WTC11 (cell line): ENCODE measurements at regions of chr12 and their contacts with region 1.

Region 1: GRCh38 chr12:94101738-94102660 is 46.4 kb upstream of the PLXNC1 start:
- DNase-seq: peak; percentile 88
- ATAC-seq: peak; percentile 81
- H3K4me3 Mint-ChIP-seq: peak overlapping the region; percentile 75
- H3K27ac Mint-ChIP-seq: no peak overlapping the region
- H3K4me1 Mint-ChIP-seq: peaks cover 9% of the 10 kb centered on the region
- H3K27me3 Mint-ChIP-seq: peaks cover 34% of the 10 kb centered on the region
- CTCF ChIP-seq: peak; percentile 58

Region 2: DNA sequence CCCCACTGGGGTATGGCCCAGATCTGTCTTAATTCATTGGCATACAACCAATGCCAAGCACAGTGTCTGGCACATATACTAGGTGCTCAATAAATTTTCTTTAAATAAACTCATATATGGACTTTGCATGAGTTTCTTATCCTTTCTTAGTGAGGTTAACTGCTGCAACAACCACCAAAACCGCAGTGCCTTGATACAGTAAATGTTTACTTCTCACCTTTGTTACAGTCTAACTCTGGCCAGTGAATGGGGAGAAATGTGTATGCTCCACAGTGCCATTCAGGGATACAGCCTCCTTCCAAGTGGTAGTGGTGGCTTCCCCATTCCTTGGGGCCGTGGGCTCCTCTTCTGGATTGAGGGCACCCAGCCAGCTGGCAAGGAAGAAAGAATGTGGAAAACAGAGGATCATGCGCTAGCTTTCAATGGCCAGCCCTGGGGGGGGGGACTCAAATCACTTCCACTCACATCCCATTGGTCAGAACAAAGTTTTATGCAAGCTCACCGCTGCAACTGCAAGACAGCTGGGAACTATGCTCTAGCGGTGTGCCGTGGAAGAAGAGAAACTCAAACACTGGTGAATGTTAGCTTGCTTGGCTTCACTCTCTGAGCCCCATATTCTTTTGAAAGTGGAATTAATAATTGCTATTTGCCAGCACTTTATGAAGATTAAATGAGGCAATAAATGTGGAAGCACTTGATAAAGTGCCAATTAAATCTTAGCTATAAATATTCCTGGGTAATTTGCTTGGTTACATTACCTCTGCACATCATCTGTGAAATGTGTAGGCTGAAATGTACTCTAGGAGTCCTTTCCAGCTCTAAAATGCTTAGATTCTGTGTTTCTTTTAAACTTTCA is 580.5 kb before region 1 on chr12:
- CTCF ChIA-PET with region 1: interaction called, 53 read pairs
- POLR2A ChIA-PET with region 1: interaction called, 7 read pairs
- DNase-seq: no peak
- ATAC-seq: peak; percentile 44
- H3K4me3 Mint-ChIP-seq: no peak overlapping the region
- H3K27ac Mint-ChIP-seq: no peak overlapping the region
- H3K4me1 Mint-ChIP-seq: peaks cover 16% of the 10 kb centered on the region
- H3K27me3 Mint-ChIP-seq: no peaks in the 10 kb centered on the region
- CTCF ChIP-seq: no peak

Region 3: DNA sequence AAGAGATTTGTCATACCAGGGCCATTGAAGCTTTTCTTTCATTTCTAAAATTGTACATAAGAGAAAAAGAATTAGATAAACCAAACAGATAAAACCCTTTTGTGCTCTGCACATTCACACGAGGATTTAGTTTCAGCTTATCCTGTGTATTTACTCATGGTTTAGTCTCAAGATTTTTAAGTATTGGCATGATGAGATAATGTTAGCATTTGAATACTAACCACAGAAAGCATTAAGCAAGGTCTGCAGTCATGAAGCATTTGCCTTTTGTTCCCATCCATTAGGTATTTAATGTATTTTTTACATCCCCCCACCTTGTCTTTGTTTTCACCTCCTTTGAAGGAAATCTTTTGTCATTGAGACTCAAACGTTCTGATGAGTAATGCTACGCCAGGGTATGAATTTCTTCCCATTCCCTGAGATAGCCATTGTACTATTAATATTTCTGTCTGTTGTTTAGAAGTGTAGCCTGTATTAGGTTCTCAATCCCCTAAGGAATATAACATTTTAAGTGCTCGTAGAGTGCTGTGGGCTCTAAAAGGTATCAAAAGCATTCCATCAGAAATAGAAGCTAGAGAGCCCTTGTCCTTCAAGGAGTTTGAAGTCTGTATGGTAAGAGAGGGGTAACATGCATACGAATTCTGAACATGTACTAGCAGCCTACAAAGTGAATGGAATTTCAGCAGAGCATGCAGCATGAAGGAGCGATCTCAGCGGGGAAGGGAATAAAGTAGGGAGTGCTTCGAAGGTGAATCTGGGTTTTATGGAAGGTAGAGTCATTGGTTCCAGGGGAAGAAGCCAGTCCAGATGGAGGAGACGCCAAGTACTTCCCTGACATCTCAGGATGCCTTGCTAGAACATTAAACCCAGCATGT is 402.5 kb before region 1 on chr12:
- CTCF ChIA-PET with region 1: interaction called, 11 read pairs
- POLR2A ChIA-PET with region 1: interaction called, 3 read pairs
- DNase-seq: no peak
- ATAC-seq: peak; percentile 51
- H3K4me3 Mint-ChIP-seq: peak overlapping the region; percentile 25
- H3K27ac Mint-ChIP-seq: peak overlapping the region; percentile 66
- H3K4me1 Mint-ChIP-seq: peaks cover 57% of the 10 kb centered on the region
- H3K27me3 Mint-ChIP-seq: no peaks in the 10 kb centered on the region
- CTCF ChIP-seq: no peak

Region 4: GRCh38 chr12:93825931-93826555 is 276.0 kb before region 1 on chr12:
- CTCF ChIA-PET with region 1: interaction called, 25 read pairs
- POLR2A ChIA-PET with region 1: no interaction called
- DNase-seq: no peak
- ATAC-seq: no peak
- H3K4me3 Mint-ChIP-seq: no peak overlapping the region
- H3K27ac Mint-ChIP-seq: no peak overlapping the region
- H3K4me1 Mint-ChIP-seq: peaks cover 10% of the 10 kb centered on the region; the same call in 1 of the 2 replicates
- H3K27me3 Mint-ChIP-seq: peaks cover 10% of the 10 kb centered on the region
- CTCF ChIP-seq: no peak

Region 5: GRCh38 chr12:93982771-93983315 is 119.2 kb before region 1 on chr12:
- CTCF ChIA-PET with region 1: interaction called, 14 read pairs
- POLR2A ChIA-PET with region 1: interaction called, 3 read pairs
- DNase-seq: no peak
- ATAC-seq: no peak
- H3K4me3 Mint-ChIP-seq: no peak overlapping the region
- H3K27ac Mint-ChIP-seq: no peak overlapping the region
- H3K4me1 Mint-ChIP-seq: peaks cover 4% of the 10 kb centered on the region
- H3K27me3 Mint-ChIP-seq: peaks cover 2% of the 10 kb centered on the region; the same call in 1 of the 2 replicates
- CTCF ChIP-seq: no peak

Region 6: DNA sequence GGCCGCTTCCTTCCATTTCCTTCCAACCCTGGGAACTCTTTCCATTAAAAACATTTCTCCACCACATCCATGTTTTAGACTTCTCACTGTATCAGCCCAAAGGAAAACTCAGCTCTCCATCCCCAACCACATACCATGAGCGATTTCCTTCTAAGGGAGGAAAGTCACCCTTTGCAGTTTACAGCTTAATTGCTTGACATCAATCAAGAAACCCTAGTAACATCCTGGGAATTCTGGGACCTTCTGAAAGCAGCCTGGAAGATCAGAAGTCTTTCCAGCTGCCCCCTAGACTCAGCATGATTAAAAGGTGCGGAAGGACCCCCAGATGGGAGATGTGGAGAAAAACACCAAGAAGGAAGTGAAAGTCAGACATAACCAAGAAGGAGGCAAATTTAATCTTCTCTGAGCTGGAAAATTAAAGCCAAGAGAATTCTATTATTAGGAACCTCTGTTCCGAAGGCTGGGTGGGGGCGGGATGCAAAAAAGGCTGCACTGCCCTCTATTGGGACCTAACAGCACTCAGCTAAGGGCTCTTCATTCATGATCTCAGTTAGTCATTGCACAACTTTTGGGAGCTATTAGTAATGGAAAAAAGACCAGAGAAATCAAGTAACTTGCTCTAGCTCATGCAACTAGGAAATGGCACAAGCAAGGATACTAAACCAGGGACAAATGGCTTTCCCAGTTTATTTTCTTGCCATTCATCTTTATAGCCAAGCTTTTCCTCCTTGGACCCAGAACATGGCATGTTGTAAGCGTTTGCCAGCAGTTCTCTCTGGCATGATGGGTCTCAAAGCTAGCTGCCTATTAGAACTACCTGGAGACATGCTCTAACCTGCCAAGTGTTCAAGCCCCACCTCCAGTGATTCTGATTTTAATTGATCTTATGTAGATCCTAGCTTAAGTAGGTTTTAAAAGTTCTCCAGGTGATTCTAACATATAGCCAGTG is 26.7 kb before region 1 on chr12:
- CTCF ChIA-PET with region 1: interaction called, 98 read pairs
- POLR2A ChIA-PET with region 1: no interaction called
- DNase-seq: no peak
- ATAC-seq: peak; percentile 85
- H3K4me3 Mint-ChIP-seq: no peak overlapping the region
- H3K27ac Mint-ChIP-seq: no peak overlapping the region
- H3K4me1 Mint-ChIP-seq: peaks cover 17% of the 10 kb centered on the region
- H3K27me3 Mint-ChIP-seq: no peaks in the 10 kb centered on the region
- CTCF ChIP-seq: 0 out of 2 replicates have a peak, but pooled peaks have one; percentile 24

Region 7: GRCh38 chr12:94244165-94245133 is 142.4 kb after region 1 on chr12:
- CTCF ChIA-PET with region 1: no interaction called
- POLR2A ChIA-PET with region 1: no interaction called
- DNase-seq: no peak
- ATAC-seq: no peak
- H3K4me3 Mint-ChIP-seq: no peak overlapping the region
- H3K27ac Mint-ChIP-seq: no peak overlapping the region
- H3K4me1 Mint-ChIP-seq: peaks cover 16% of the 10 kb centered on the region
- H3K27me3 Mint-ChIP-seq: no peaks in the 10 kb centered on the region
- CTCF ChIP-seq: no peak

Region 8: GRCh38 chr12:94289461-94290312 is 187.7 kb after region 1 on chr12:
- CTCF ChIA-PET with region 1: no interaction called
- POLR2A ChIA-PET with region 1: no interaction called
- DNase-seq: no peak
- ATAC-seq: no peak
- H3K4me3 Mint-ChIP-seq: no peak overlapping the region
- H3K27ac Mint-ChIP-seq: no peak overlapping the region
- H3K4me1 Mint-ChIP-seq: peaks cover 50% of the 10 kb centered on the region
- H3K27me3 Mint-ChIP-seq: no peaks in the 10 kb centered on the region
- CTCF ChIP-seq: no peak